ENCODE measurements at regions of chr2 and their contacts with region 1.

Region 1: GRCh38 chr2:240840435-240841080 is 20.5 kb upstream of the KIF1A start:
- DNase-seq: peak; percentile 51 to 64
- ATAC-seq: peak; percentile 70 to 86 (median 76)
- H3K4me3 ChIP-seq: no peak overlapping the region
- H3K27ac ChIP-seq: no peak overlapping the region
- H3K4me1 ChIP-seq: peaks cover 0 to 9% (median 4%) of the 10 kb centered on the region in 9 donors
- H3K27me3 ChIP-seq: peaks cover 0 to 48% (median 14%) of the 10 kb centered on the region in 7 donors
- CTCF ChIP-seq: peak; percentile 21 to 73 (median 62)

Region 2: DNA sequence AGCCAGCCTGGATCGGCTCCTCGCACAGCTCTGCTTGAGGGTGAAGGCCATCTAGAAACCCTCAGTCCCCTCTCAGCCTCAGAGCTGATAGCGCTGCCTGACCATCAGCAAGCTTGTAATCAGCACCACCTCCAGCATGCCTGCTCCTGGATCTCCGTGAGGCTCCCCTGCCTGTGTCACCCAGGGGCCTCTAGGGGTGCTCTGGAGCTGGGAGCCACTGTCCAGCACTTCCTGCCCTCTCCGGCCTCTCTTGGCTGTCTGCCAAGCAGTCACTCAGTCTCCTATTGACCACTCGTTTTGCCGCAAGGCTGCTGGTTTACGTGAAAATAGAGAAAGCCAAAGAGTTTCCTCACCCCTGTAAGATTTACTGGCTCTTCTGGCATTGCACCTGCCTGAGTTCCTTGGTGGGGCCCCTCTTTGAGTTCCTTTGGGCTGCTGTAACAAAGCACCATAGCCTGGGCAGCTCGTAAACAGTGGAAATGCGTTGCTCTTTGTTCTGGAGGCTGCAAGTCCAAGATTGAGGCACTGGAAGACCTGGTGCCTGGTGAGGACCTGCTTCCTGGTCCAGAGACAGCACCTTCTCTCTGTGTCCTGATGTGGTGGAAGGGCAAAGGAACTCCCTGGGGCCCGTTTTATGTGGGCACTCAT is 236.1 kb before region 1 on chr2:
- intact Hi-C with region 1: loop called in 1 of 10 experiments (anchors 5 kb)
- DNase-seq: peak; percentile 79 to 84
- ATAC-seq: peak; percentile 61 to 89 (median 84)
- H3K4me3 ChIP-seq: no peak overlapping the region
- H3K27ac ChIP-seq: peak overlapping the region in 1 of 10 donors; percentile 56
- H3K4me1 ChIP-seq: peaks cover 0 to 12% (median 8%) of the 10 kb centered on the region in 9 donors
- H3K27me3 ChIP-seq: no peaks in the 10 kb centered on the region
- CTCF ChIP-seq: peak; percentile 40 to 82 (median 68)